Activated naive CD4-positive, alpha-beta T cell treated with anti-CD3 and anti-CD28 coated beads for 36 hours (primary cell): ENCODE measurements at regions of chr7 and their contacts with region 1.

Region 1: GRCh38 chr7:72785166-72785955 is 42.6 kb downstream of the TYW1B start:
- DNase-seq: no peak
- H3K4me3 Mint-ChIP-seq: no peak overlapping the region
- H3K27ac Mint-ChIP-seq: no peak overlapping the region
- H3K4me1 Mint-ChIP-seq: no peaks in the 10 kb centered on the region
- H3K27me3 Mint-ChIP-seq: no peaks in the 10 kb centered on the region

Region 2: DNA sequence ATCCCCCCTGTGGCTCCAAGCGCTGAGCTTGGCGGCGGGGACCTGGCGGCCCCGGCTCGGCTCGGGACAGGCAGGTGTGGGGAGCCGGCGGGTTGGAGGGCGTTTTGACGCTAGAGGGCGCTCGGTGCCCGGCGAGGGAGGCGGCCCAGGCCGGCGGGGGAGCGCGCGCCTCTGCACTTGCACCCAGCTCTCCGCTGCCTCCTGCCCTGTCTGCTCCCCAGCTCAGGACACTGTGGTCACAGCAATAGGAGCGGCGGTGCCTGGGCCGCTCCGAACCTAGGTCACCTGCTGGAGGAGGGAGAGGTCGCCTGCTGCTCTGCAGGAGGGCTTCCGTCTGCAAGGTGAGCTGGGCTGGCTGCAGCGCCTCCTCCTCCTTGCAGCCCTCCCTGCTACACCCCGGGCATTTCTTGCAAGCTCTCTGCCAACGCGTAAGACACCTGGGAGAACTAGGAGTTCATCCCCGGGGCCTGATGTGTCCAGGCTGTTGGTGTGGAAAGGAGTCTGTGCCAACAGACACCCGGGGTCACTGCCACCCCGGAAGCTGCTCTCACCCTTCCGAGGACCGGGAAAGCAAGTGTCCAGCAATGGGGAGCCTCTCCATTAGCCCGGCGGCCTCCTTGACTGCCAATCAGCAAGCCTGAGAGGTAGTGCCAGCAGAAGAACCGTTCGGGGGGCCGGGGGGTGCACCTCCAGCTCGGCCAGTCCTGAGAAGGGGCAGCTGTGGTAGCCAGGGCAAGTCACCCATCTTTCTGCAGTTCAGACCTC is 1033.0 kb before region 1 on chr7:
- CTCF ChIA-PET with region 1: interaction called, 4 read pairs
- intact Hi-C with region 1: loop called (anchors 10 kb)
- DNase-seq: peak; percentile 60
- H3K4me3 Mint-ChIP-seq: no peak overlapping the region
- H3K27ac Mint-ChIP-seq: no peak overlapping the region
- H3K4me1 Mint-ChIP-seq: no peaks in the 10 kb centered on the region
- H3K27me3 Mint-ChIP-seq: peaks cover 26% of the 10 kb centered on the region